CD8-positive, alpha-beta T cell (primary cell): ENCODE measurements at regions of chr5 and their contacts with region 1.

Region 1: GRCh38 chr5:43191740-43192557 is at the start of gene NIM1K:
- DNase-seq: peak in 7 of 9 experiments; percentile 1 to 56 (median 28)
- ATAC-seq: peak; percentile 37
- H3K4me3 ChIP-seq: peak within 1 kb of the TSS; percentile 47 to 56
- H3K4me3 Mint-ChIP-seq: peak within 1 kb of the TSS; percentile 89
- H3K27ac ChIP-seq: no peak within 1 kb of the TSS
- H3K27ac Mint-ChIP-seq: peak within 1 kb of the TSS; percentile 13
- H3K4me1 ChIP-seq: peaks cover 19% of the 10 kb centered on the region
- H3K4me1 Mint-ChIP-seq: peaks cover 27% of the 10 kb centered on the region
- H3K27me3 ChIP-seq: peaks cover 4 to 8% of the 10 kb centered on the region in 2 experiments
- H3K27me3 Mint-ChIP-seq: peaks cover 24% of the 10 kb centered on the region
- CTCF ChIP-seq: no peak
- total RNA-seq, gene NIM1K: 0.14 to 0.46 TPM

Region 2: GRCh38 chr5:43129161-43129560 is 62.8 kb before region 1 on chr5:
- CTCF ChIA-PET with region 1: no interaction called
- POLR2A ChIA-PET with region 1: no interaction called
- intact Hi-C with region 1: loop called in 1 of 2 experiments (anchors 5 kb)
- DNase-seq: no peak
- ATAC-seq: no peak
- H3K4me3 ChIP-seq: no peak overlapping the region
- H3K4me3 Mint-ChIP-seq: no peak overlapping the region
- H3K27ac ChIP-seq: no peak overlapping the region
- H3K27ac Mint-ChIP-seq: peak overlapping the region; percentile 55
- H3K4me1 ChIP-seq: peaks cover 24% of the 10 kb centered on the region
- H3K4me1 Mint-ChIP-seq: peaks cover 67% of the 10 kb centered on the region
- H3K27me3 ChIP-seq: no peaks in the 10 kb centered on the region
- H3K27me3 Mint-ChIP-seq: no peaks in the 10 kb centered on the region
- CTCF ChIP-seq: no peak

Region 3: GRCh38 chr5:43174586-43174985 is 17.4 kb before region 1 on chr5:
- CTCF ChIA-PET with region 1: no interaction called
- POLR2A ChIA-PET with region 1: no interaction called
- intact Hi-C with region 1: no loop called
- DNase-seq: no peak
- ATAC-seq: no peak
- H3K4me3 ChIP-seq: no peak overlapping the region
- H3K4me3 Mint-ChIP-seq: no peak overlapping the region
- H3K27ac ChIP-seq: no peak overlapping the region
- H3K27ac Mint-ChIP-seq: peak overlapping the region; percentile 34
- H3K4me1 ChIP-seq: no peaks in the 10 kb centered on the region
- H3K4me1 Mint-ChIP-seq: peaks cover 5% of the 10 kb centered on the region
- H3K27me3 ChIP-seq: no peaks in the 10 kb centered on the region
- H3K27me3 Mint-ChIP-seq: no peaks in the 10 kb centered on the region
- CTCF ChIP-seq: no peak

Region 4: GRCh38 chr5:43646992-43647391 is 455.0 kb after region 1 on chr5:
- CTCF ChIA-PET with region 1: no interaction called
- POLR2A ChIA-PET with region 1: no interaction called
- intact Hi-C with region 1: no loop called
- DNase-seq: no peak
- ATAC-seq: no peak
- H3K4me3 ChIP-seq: no peak overlapping the region
- H3K4me3 Mint-ChIP-seq: no peak overlapping the region
- H3K27ac ChIP-seq: no peak overlapping the region
- H3K27ac Mint-ChIP-seq: no peak overlapping the region
- H3K4me1 ChIP-seq: no peaks in the 10 kb centered on the region
- H3K4me1 Mint-ChIP-seq: peaks cover 5% of the 10 kb centered on the region
- H3K27me3 ChIP-seq: no peaks in the 10 kb centered on the region
- H3K27me3 Mint-ChIP-seq: no peaks in the 10 kb centered on the region
- CTCF ChIP-seq: no peak